ENCODE measurements at regions of chr1 and their contacts with region 1.

Region 1: DNA sequence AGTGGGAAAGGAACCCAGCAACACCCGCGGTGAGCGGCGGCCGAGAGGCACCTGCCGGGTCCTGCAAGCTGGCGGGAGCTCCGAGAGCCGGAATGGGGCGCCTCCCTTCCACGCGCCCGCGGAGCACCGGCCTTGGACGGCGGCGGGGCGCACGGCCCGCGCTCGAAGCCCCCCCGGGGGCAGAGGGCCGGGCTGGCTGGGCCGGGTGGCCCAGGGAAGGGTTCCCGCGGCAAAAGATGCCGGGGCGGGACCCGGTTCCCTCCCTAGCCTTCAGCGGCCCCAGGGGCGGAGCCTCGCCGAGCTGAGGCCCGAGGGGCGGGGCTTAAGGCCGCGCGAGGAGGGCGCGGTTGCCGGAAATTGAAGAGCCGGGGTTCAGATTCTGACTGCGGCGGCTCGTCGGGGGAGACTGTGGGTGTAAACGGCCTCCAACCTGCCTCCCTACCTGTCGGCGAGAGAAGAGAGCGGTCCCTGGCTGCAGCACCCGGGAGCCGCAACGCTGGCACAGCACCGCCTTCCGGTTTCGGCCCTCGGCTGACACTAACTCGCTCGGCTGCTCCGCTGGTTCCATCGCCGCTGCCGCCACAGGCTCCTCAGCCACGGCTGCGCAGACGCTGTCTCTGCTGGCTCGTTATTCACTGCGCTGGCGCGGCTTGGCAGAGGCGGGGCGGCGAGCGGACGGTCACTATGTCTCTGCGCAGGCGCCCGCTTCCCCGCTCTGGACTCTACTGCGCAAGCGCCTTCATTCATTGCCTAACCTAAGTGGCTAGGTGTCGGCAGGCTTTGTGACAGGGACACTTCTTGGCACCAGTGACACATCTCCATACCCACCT is at the start of gene RABIF:
- DNase-seq: peak; percentile 98
- ATAC-seq: peak; percentile 94
- H3K4me3 Mint-ChIP-seq: peak within 1 kb of the TSS; percentile 91
- H3K27ac Mint-ChIP-seq: peak within 1 kb of the TSS; percentile 96
- H3K4me1 Mint-ChIP-seq: peaks cover 15% of the 10 kb centered on the region
- H3K27me3 Mint-ChIP-seq: no peaks in the 10 kb centered on the region
- total RNA-seq, gene RABIF: 6.8 to 7.4 TPM

Region 2: DNA sequence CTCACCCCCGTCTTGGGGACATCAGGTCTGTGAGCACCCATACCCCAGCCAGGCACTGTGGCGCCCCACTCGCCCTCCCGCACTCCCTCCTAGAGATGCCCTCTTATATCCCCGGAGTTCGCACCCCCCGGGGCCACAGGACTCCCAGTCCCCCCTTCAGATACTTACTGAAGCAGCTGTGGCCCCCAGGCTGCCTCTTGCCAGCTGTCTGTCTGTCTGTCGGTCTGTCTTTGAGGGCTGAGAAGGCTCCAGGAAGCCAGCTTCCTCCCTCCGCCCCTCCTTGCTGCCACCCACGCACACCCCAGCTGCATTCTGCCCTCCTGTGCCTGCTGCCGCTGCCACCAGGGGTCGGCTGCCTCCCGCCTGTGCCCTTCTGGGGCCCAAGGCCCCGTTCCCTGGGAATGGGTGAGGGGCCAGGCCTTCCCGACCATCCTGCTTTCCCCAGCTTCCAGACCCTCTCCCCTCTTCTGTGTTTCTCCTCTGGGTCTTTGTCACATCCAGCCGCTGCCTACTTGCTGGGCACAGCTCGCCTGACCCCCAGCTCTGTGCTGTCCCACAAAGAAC is 728.3 kb before region 1 on chr1 and contains the start of gene PTPN7:
- CTCF ChIA-PET with region 1: no interaction called
- POLR2A ChIA-PET with region 1: no interaction called
- intact Hi-C with region 1: loop called in 1 of 2 experiments (anchors 1 kb)
- DNase-seq: peak; percentile 98
- ATAC-seq: peak; percentile 69
- H3K4me3 Mint-ChIP-seq: peak within 1 kb of the TSS; percentile 97
- H3K27ac Mint-ChIP-seq: peak within 1 kb of the TSS; percentile 99
- H3K4me1 Mint-ChIP-seq: peaks cover 80% of the 10 kb centered on the region
- H3K27me3 Mint-ChIP-seq: no peaks in the 10 kb centered on the region
- total RNA-seq, gene PTPN7: 188 to 221 TPM

Region 3: GRCh38 chr1:202926720-202927491 is 38.2 kb after region 1 on chr1 and contains the start of gene KLHL12:
- CTCF ChIA-PET with region 1: interaction called, 6 read pairs
- POLR2A ChIA-PET with region 1: no interaction called
- intact Hi-C with region 1: loop called in 1 of 2 experiments (anchors 1 kb)
- DNase-seq: peak; percentile 98
- ATAC-seq: peak; percentile 96
- H3K4me3 Mint-ChIP-seq: peak within 1 kb of the TSS; percentile 86
- H3K27ac Mint-ChIP-seq: peak within 1 kb of the TSS; percentile 85
- H3K4me1 Mint-ChIP-seq: peaks cover 24% of the 10 kb centered on the region
- H3K27me3 Mint-ChIP-seq: no peaks in the 10 kb centered on the region
- total RNA-seq, gene KLHL12: 32.1 to 39.1 TPM

Region 4: GRCh38 chr1:202957733-202958543 is 69.2 kb after region 1 on chr1 and contains the start of gene ADIPOR1:
- CTCF ChIA-PET with region 1: no interaction called
- POLR2A ChIA-PET with region 1: interaction called, 3 read pairs
- intact Hi-C with region 1: loop called (anchors 1 to 2 kb)
- DNase-seq: peak; percentile 96
- ATAC-seq: peak; percentile 100
- H3K4me3 Mint-ChIP-seq: peak within 1 kb of the TSS; percentile 83
- H3K27ac Mint-ChIP-seq: peak within 1 kb of the TSS; percentile 82
- H3K4me1 Mint-ChIP-seq: peaks cover 46% of the 10 kb centered on the region
- H3K27me3 Mint-ChIP-seq: no peaks in the 10 kb centered on the region
- total RNA-seq, gene ADIPOR1: 65.4 to 85.1 TPM